Activated naive CD4-positive, alpha-beta T cell treated with anti-CD3 and anti-CD28 coated beads for 36 hours (primary cell): ENCODE measurements at regions of chr1 and their contacts with region 1.

Region 1: GRCh38 chr1:180502360-180503273 is at the start of gene ACBD6:
- DNase-seq: peak; percentile 92
- H3K4me3 Mint-ChIP-seq: peak within 1 kb of the TSS; percentile 98
- H3K27ac Mint-ChIP-seq: peak within 1 kb of the TSS; percentile 93
- H3K4me1 Mint-ChIP-seq: peaks cover 34% of the 10 kb centered on the region
- H3K27me3 Mint-ChIP-seq: no peaks in the 10 kb centered on the region
- total RNA-seq, gene ACBD6: 31.1 to 32.9 TPM

Region 2: GRCh38 chr1:180154325-180155181 is 348.1 kb before region 1 on chr1 and contains the start of gene QSOX1:
- CTCF ChIA-PET with region 1: no interaction called
- intact Hi-C with region 1: loop called (anchors 1 kb)
- DNase-seq: peak; percentile 91
- H3K4me3 Mint-ChIP-seq: peak within 1 kb of the TSS; percentile 89
- H3K27ac Mint-ChIP-seq: peak within 1 kb of the TSS; percentile 67
- H3K4me1 Mint-ChIP-seq: peaks cover 22% of the 10 kb centered on the region
- H3K27me3 Mint-ChIP-seq: no peaks in the 10 kb centered on the region
- total RNA-seq, gene QSOX1: 27.6 to 31.9 TPM

Region 3: GRCh38 chr1:180252638-180253536 is 249.7 kb before region 1 on chr1:
- CTCF ChIA-PET with region 1: no interaction called
- intact Hi-C with region 1: no loop called
- DNase-seq: peak; percentile 89
- H3K4me3 Mint-ChIP-seq: no peak overlapping the region
- H3K27ac Mint-ChIP-seq: no peak overlapping the region
- H3K4me1 Mint-ChIP-seq: no peaks in the 10 kb centered on the region
- H3K27me3 Mint-ChIP-seq: peaks cover 36% of the 10 kb centered on the region

Region 4: GRCh38 chr1:180515864-180516388 is 13.3 kb after region 1 on chr1:
- CTCF ChIA-PET with region 1: interaction called, 19 read pairs
- intact Hi-C with region 1: no loop called
- DNase-seq: peak; percentile 76
- H3K4me3 Mint-ChIP-seq: no peak overlapping the region
- H3K27ac Mint-ChIP-seq: no peak overlapping the region
- H3K4me1 Mint-ChIP-seq: peaks cover 3% of the 10 kb centered on the region
- H3K27me3 Mint-ChIP-seq: peaks cover 3% of the 10 kb centered on the region

Region 5: DNA sequence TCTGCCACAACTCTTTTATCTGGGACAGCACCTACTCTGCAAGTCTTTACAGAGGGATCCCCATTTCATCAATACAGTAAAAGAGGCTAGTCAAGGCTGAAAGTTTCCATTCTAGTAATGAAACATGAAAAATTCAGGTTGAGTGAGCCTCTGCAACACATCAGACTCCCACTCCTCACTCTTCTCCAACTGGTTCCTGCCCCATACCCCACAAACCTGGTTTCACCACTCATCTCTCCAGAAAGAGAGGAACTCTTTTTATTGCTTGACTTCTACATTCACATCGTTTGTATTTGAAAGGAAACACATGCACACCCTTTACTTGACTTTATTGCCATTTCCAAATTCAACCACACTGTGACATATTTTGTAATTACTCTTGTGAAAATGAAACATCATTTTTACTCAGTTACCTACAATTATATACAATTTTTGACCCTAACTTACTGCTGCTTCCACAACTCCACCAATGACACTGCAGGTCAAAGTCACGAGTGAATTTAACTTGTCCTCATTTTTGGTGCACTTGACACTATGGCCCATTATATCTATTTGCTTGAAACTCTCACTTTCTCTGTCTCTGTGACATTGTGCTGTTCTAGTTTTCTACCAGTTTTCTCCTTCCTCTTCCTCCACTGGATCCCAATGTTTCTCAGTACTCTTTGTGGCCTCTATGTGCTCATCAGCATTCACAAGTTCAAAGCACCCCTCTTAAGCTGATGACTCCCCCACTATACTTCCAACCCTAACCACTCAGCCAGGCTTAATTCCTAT is 512.0 kb after region 1 on chr1:
- CTCF ChIA-PET with region 1: no interaction called
- intact Hi-C with region 1: loop called (anchors 2 kb)
- DNase-seq: peak; percentile 33
- H3K4me3 Mint-ChIP-seq: no peak overlapping the region
- H3K27ac Mint-ChIP-seq: no peak overlapping the region
- H3K4me1 Mint-ChIP-seq: peaks cover 43% of the 10 kb centered on the region
- H3K27me3 Mint-ChIP-seq: no peaks in the 10 kb centered on the region

Region 6: DNA sequence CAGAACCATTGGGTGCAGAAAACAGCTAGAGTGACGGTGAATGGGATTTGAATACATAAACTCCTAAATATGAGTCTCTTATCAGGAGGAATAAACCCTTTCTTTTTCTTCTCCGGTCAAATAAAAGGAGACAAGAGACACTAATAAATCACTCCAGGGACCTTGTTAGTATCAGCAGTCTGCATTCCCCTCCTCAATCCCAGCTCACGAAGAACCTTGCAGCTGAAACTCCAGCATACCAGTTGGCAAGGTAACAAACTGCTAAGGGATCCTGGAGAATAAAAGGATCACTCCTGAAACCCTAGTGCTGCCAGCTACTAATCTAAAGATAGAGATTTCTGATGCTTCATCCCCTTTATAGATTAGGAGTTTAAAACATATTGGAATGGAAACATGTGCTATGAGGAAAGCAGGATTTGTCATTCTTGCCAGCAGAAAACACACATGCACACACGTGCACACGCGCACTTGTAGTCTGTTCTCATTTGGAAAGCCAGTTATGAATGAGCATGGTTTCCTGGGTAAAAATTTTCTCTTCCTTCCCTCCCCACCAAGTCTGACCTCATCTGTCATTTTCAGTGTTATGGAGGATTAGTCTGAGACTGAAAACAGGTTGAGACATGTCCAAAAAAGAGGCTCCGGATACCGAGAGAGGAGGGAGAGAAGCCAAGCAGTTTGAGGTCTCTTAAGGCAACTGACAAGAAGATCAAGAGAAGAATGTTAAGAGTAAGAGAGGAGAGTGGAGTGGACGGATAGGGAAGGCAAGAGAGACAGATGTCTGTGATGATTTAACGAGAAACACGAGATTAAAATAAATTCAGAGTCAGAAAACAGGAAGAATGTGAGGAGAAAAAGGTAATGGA is 596.8 kb after region 1 on chr1:
- CTCF ChIA-PET with region 1: no interaction called
- intact Hi-C with region 1: loop called (anchors 2 kb)
- DNase-seq: peak; percentile 80
- H3K4me3 Mint-ChIP-seq: peak overlapping the region; percentile 67
- H3K27ac Mint-ChIP-seq: peak overlapping the region; percentile 99
- H3K4me1 Mint-ChIP-seq: peaks cover 88% of the 10 kb centered on the region
- H3K27me3 Mint-ChIP-seq: no peaks in the 10 kb centered on the region

Region 7: DNA sequence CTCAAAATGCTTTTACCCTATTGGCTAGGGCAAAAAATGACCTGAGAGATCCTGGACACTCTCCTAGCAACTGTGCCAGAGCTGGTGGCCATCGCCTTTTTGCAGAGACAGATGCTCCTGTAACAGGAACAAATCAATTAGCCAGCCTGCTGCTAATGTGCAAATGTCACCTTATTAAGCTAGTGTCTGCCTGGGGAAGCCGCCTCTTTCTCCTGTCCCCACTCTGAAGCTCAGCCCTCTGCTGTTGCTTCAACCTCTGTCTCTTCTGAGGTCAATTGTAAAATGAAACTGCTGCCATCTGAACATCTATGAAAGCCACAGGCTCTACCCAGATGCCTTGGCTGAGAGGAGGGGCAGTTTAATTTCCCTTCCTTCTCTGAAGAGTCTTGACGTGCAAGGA is 895.2 kb after region 1 on chr1:
- CTCF ChIA-PET with region 1: no interaction called
- intact Hi-C with region 1: loop called (anchors 5 kb)
- DNase-seq: peak; percentile 23
- H3K4me3 Mint-ChIP-seq: no peak overlapping the region
- H3K27ac Mint-ChIP-seq: no peak overlapping the region
- H3K4me1 Mint-ChIP-seq: peaks cover 39% of the 10 kb centered on the region
- H3K27me3 Mint-ChIP-seq: no peaks in the 10 kb centered on the region